PC-9 (cell line): ENCODE measurements at regions of chr2 and their contacts with region 1.

Region 1: DNA sequence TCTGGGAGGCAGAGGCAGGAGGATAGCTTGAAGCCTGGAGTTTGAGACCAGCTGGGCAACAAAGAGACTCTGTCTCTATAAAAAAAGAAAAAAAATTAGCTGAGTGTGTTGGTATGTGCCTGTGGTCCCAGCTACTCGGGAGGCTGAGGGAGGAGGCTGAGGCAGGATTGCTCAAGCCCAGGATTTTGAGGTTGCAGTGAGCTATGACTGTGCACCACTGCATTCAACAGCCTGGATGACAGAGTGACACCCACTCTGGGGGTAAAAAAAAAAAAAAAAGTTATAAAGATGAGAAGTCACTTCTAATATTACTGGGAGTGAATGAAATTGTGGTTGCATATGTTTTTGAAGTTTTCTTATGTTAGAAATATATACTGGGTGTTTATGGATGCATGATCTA is 71.6 kb downstream of the C2orf74 start:
- DNase-seq: no peak
- H3K4me3 ChIP-seq: no peak overlapping the region
- H3K27ac ChIP-seq: no peak overlapping the region
- H3K4me1 ChIP-seq: no peaks in the 10 kb centered on the region
- H3K27me3 ChIP-seq: no peaks in the 10 kb centered on the region
- CTCF ChIP-seq: no peak

Region 2: GRCh38 chr2:61262699-61263098 is 29.1 kb after region 1 on chr2:
- CTCF ChIA-PET with region 1: no interaction called
- POLR2A ChIA-PET with region 1: interaction called, 16 read pairs
- intact Hi-C with region 1: no loop called
- DNase-seq: no peak
- H3K4me3 ChIP-seq: no peak overlapping the region
- H3K27ac ChIP-seq: no peak overlapping the region
- H3K4me1 ChIP-seq: no peaks in the 10 kb centered on the region
- H3K27me3 ChIP-seq: no peaks in the 10 kb centered on the region
- CTCF ChIP-seq: no peak